Activated CD4-positive, alpha-beta T cell treated with anti-CD3 and anti-CD28 coated beads for 36 hours (primary cell): ENCODE measurements at regions of chr14 and their contacts with region 1.

Region 1: DNA sequence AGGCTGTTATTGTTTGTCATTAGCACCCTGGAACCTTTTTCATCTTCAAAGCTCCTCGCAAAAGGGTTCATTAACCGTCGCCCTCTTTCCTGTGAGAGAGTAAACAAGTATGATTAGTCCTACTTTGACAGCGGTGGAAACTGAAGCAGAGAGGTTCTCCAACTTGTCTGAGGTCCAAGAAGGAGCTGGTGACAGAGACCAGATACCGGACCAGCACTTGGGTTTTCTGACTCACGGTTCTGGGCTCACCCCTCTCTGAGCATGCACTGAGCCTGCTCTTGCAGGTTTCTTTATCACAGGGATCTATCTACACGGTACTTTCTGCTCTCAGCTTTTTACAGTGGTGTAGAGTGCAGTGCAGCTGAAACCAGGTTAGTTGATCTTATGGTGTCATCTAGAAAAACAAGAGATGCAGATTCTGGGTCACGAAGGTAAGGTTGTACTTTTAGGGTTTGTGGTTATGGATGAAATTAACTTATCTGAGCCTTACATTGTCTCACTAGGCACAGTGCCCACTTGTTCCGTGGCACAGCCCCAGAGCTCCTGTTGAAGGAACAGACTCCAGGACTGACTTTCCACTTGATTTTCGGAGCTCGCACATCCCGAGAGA is 62.1 kb downstream of the PPP2R5C start:
- DNase-seq: peak; percentile 87
- ATAC-seq: peak; percentile 80
- H3K4me3 Mint-ChIP-seq: peak overlapping the region; percentile 68
- H3K27ac Mint-ChIP-seq: peak overlapping the region; percentile 97
- H3K4me1 Mint-ChIP-seq: peaks cover 87% of the 10 kb centered on the region
- H3K27me3 Mint-ChIP-seq: no peaks in the 10 kb centered on the region

Region 2: GRCh38 chr14:101635749-101636560 is 187.7 kb before region 1 on chr14:
- CTCF ChIA-PET with region 1: no interaction called
- POLR2A ChIA-PET with region 1: no interaction called
- intact Hi-C with region 1: loop called in 1 of 2 experiments (anchors 1 kb)
- DNase-seq: peak; percentile 80
- ATAC-seq: peak; percentile 99
- H3K4me3 Mint-ChIP-seq: no peak overlapping the region
- H3K27ac Mint-ChIP-seq: no peak overlapping the region
- H3K4me1 Mint-ChIP-seq: peaks cover 18% of the 10 kb centered on the region
- H3K27me3 Mint-ChIP-seq: peaks cover 29% of the 10 kb centered on the region

Region 3: GRCh38 chr14:101767618-101768362 is 55.8 kb before region 1 on chr14:
- CTCF ChIA-PET with region 1: interaction called, 11 read pairs
- POLR2A ChIA-PET with region 1: interaction called, 6 read pairs
- intact Hi-C with region 1: loop called (anchors 1 to 2 kb)
- DNase-seq: no peak
- ATAC-seq: no peak
- H3K4me3 Mint-ChIP-seq: no peak overlapping the region
- H3K27ac Mint-ChIP-seq: no peak overlapping the region
- H3K4me1 Mint-ChIP-seq: peaks cover 42% of the 10 kb centered on the region
- H3K27me3 Mint-ChIP-seq: no peaks in the 10 kb centered on the region

Region 4: DNA sequence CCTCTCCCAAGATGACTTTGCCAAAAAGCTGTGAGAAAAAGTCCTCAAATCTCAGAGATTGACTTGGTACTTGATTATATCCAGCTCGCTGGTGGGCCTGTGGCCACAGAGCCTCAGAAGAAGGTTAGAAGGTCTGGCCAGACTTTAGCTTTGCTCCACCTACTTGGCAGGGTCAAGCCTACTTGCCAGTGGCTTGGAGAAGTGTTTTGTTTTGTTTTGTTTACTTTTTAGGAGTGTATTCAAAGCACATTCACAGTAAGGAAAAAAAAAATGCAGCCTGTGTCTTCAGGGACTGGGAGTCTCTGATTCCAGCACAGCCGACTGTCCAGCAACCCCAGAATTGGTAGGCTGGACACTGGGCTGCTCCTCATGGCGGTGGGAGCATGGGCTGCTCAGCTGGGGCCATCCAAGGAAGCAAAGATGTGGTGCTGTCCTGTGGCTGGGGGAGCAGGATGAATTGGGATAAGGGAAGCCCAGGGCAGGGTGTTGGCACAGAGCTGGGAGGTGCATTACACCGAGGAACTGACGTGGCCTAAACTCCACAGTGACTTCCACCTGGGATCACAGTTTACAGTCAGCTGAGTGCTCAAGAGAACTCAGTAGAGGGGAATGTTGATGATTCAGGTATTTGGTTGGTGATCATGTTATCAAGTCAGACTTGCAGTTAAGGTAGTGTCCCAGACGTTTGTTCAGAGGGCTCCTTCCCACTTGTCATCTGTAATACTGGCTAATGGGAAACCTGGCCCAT is 11.4 kb after region 1 on chr14:
- CTCF ChIA-PET with region 1: interaction called, 5 read pairs
- POLR2A ChIA-PET with region 1: interaction called, 20 read pairs
- intact Hi-C with region 1: loop called (anchors 1 kb)
- DNase-seq: no peak
- ATAC-seq: no peak
- H3K4me3 Mint-ChIP-seq: no peak overlapping the region
- H3K27ac Mint-ChIP-seq: peak overlapping the region; percentile 70
- H3K4me1 Mint-ChIP-seq: peaks cover 93% of the 10 kb centered on the region
- H3K27me3 Mint-ChIP-seq: no peaks in the 10 kb centered on the region

Region 5: DNA sequence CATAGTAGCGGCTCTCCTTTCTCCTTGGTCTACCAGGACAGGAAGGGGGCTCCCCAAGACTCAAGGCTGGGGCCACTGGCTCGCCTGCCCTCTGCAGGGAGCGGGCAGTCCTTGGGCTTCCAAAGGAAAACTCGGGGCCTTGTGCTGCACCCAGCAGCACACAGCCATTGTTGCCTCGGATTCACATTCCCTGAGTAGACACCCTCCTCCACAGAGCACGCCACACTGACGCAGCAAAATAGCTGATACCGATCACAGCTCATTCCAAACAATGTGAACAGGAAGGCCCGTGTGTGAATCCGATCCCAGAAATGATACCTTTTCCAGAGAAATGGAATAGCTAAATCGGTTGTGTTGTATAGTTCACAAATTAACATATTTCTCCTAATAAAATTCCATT is 75.6 kb after region 1 on chr14:
- CTCF ChIA-PET with region 1: no interaction called
- POLR2A ChIA-PET with region 1: no interaction called
- intact Hi-C with region 1: no loop called
- DNase-seq: no peak
- ATAC-seq: no peak
- H3K4me3 Mint-ChIP-seq: no peak overlapping the region
- H3K27ac Mint-ChIP-seq: no peak overlapping the region
- H3K4me1 Mint-ChIP-seq: no peaks in the 10 kb centered on the region
- H3K27me3 Mint-ChIP-seq: no peaks in the 10 kb centered on the region

Region 6: DNA sequence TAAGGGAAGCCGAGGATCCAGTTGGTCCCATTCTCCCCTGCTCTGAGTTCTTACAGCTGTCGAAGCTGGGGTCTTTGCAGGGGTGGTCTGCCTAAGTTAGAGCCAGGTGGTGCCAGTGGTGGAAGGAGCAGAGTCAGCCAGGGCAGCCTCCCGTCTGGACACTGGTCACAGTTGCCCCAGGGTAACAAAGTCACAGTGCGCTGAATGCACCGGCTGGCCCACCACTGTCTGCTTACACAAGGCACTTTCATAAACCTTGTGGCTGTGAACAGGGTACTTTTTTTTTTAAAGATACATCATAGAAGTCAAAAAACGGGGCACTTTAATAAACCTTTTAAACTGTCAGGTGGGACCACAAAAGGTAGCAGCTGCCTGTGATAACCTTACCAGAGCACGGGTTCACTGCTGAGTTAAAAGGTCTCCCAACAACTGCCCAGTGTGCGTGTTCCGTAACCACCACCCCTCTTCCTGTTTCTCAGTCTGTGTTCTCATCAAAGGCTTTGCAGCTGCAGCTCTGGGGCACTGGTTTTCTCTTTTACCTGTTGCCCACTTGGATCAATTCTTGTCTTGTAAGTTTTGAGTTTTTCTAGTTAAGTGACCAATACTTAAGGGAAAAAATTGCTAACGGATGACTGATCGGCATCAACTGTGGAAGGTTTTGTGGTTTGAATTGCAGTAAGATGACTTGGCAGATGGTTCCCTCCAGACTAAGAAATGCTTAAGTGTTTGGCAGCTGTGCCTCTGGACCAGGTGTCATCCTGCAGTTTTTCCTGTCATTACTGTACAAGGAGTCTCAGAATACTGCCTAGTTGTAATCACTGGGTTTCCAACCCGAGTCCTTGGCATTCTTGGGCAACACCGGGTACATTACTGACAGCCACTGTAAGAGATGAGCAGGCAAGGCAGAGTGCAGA is 196.7 kb after region 1 on chr14:
- CTCF ChIA-PET with region 1: no interaction called
- POLR2A ChIA-PET with region 1: no interaction called
- intact Hi-C with region 1: loop called in 1 of 2 experiments (anchors 1 kb)
- DNase-seq: peak; percentile 79
- ATAC-seq: peak; percentile 89
- H3K4me3 Mint-ChIP-seq: peak overlapping the region; percentile 13
- H3K27ac Mint-ChIP-seq: peak overlapping the region; percentile 88
- H3K4me1 Mint-ChIP-seq: peaks cover 20% of the 10 kb centered on the region
- H3K27me3 Mint-ChIP-seq: no peaks in the 10 kb centered on the region

Region 7: DNA sequence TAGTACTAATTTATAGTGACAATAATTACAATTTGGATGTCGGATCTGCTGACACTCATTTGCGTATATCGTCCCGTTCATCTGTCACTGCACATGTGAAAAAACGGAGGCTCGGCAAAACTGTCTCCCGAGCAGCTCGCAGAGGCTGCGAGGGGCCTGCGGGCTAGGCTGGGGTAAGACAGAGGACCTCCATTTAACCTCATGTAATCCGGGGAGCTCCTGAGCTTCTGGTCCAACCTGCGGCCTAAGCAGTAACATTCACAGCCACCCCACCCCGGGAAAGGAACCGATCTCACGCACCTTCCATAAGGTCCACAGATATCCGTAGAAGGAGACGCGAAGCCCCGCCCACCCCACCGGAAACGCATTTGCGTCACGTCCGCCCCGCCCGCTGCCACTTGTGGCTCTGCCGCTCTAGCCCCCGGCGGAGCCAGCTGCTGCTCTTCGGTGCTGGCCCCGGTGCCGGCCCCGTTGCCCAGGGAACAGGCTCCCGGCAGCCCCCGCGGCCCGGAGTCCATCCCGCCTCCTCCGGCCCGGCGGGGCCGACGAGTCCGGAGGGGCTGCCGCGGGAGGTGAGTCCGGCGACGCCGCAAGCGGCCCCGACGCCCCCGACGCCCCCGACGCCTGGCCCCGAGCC is 539.0 kb after region 1 on chr14 and contains the starts of genes CINP and TECPR2:
- CTCF ChIA-PET with region 1: no interaction called
- POLR2A ChIA-PET with region 1: no interaction called
- intact Hi-C with region 1: loop called in 1 of 2 experiments (anchors 5 kb)
- DNase-seq: peak; percentile 99
- ATAC-seq: peak; percentile 78
- H3K4me3 Mint-ChIP-seq: no peak within 1 kb of the TSS
- H3K27ac Mint-ChIP-seq: peak within 1 kb of the TSS; percentile 96
- H3K4me1 Mint-ChIP-seq: peaks cover 36% of the 10 kb centered on the region
- H3K27me3 Mint-ChIP-seq: no peaks in the 10 kb centered on the region
- total RNA-seq, gene CINP: 47.0 to 51.4 TPM
- total RNA-seq, gene TECPR2: 5.6 to 6.9 TPM